Panc1 (cell line): ENCODE measurements at regions of chr13 and their contacts with region 1.

Region 1: DNA sequence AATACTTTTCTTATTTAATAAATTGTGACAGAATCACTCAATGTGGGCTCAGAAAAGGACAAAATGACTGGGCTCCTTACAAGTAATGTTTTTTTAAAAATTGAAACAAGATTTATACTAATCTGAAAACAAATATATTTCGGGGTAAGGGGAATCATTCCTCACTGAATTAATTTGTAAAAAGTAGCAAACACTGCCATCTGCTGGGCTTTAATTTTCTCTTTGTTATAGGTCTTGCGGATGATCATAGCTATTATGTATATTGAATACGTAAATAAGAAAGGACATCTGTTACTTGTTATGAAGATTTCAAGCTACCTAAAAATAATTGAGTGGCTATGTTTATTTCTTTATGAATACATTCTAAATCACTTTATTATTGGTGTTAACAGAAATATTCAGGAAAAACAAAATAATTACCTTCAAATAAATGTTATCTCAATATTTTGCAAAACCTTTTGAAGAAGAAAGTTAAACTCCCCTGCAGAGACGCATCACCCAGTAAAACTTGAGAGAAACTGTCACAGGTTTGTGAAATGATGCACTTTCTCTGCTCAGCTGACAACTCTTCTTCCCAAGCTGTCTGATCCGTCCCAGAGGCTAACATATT is 17.8 kb upstream of the ENOX1 start:
- DNase-seq: peak; percentile 30
- ATAC-seq: peak; percentile 74
- H3K4me3 ChIP-seq: no peak overlapping the region
- H3K27ac ChIP-seq: no peak overlapping the region
- H3K4me1 ChIP-seq: no peaks in the 10 kb centered on the region
- H3K27me3 ChIP-seq: no peaks in the 10 kb centered on the region
- CTCF ChIP-seq: peak; percentile 41; the same call in 1 of the 2 replicates

Region 2: GRCh38 chr13:42969558-42970172 is 834.9 kb before region 1 on chr13:
- CTCF ChIA-PET with region 1: no interaction called
- POLR2A ChIA-PET with region 1: no interaction called
- in situ Hi-C with region 1: no loop called
- intact Hi-C with region 1: loop called (anchors 5 kb)
- DNase-seq: no peak
- ATAC-seq: peak; percentile 90
- H3K4me3 ChIP-seq: no peak overlapping the region
- H3K27ac ChIP-seq: no peak overlapping the region
- H3K4me1 ChIP-seq: no peaks in the 10 kb centered on the region
- H3K27me3 ChIP-seq: no peaks in the 10 kb centered on the region
- CTCF ChIP-seq: peak; percentile 85

Region 3: GRCh38 chr13:43085545-43085944 is 719.0 kb before region 1 on chr13:
- CTCF ChIA-PET with region 1: no interaction called
- POLR2A ChIA-PET with region 1: no interaction called
- in situ Hi-C with region 1: no loop called
- intact Hi-C with region 1: loop called (anchors 5 kb)
- DNase-seq: peak; percentile 0
- ATAC-seq: no peak
- H3K4me3 ChIP-seq: no peak overlapping the region
- H3K27ac ChIP-seq: no peak overlapping the region
- H3K4me1 ChIP-seq: no peaks in the 10 kb centered on the region; the same call in 1 of the 2 replicates
- H3K27me3 ChIP-seq: no peaks in the 10 kb centered on the region
- CTCF ChIP-seq: peak; percentile 47; the same call in 1 of the 2 replicates

Region 4: DNA sequence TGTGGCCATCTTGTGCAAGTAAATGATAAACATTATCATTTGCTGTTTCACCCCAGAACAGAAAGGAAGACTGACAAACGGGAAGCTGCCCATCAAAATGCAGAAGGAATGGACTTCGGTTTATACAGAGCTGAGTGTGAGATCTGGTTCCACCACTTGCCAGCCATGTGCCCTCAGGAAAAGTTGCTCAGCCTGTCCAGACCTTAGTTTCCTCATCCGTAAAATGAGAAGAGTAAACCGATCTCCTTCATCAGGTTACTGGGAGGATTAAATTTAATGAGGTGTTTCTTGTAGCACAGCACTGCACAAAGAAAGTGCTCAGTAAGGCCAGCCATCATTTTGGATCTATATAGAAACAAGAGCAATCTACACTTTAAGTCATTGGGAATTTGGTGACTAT is 532.4 kb after region 1 on chr13:
- CTCF ChIA-PET with region 1: no interaction called
- POLR2A ChIA-PET with region 1: interaction called, 11 read pairs
- in situ Hi-C with region 1: no loop called
- intact Hi-C with region 1: no loop called
- DNase-seq: no peak
- ATAC-seq: no peak
- H3K4me3 ChIP-seq: no peak overlapping the region
- H3K27ac ChIP-seq: no peak overlapping the region
- H3K4me1 ChIP-seq: no peaks in the 10 kb centered on the region
- H3K27me3 ChIP-seq: no peaks in the 10 kb centered on the region
- CTCF ChIP-seq: no peak